MCF 10A (cell line): ENCODE measurements at regions of chr14 and their contacts with region 1.

Region 1: DNA sequence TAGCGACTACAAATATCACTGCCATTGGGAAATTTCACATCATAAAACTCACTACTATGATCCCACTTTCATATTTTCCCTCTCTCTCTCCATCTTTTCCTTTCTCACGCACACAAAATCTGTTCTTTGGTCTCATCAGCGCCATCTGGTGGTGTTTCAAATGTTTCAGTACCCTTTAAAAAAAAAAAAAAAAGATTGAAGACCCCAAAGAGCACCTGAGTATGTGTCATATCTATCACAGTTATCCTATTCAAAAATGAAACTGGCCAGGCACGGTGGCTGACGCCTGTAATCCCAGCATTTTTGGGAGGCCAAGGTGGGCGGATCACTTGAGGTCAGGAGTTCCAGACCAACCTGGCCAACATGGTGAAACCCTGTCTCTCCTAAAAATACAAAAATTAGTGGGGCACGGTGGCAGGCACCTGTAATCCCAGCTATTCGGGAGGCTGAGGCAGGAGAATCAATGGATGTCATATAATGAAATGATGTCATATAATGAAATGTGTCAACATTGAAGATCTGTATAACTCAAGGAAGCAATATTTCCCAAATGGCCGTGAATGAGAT is 72.4 kb downstream of the TTC9 start:
- DNase-seq: peak; percentile 72
- H3K4me3 Mint-ChIP-seq: no peak overlapping the region
- H3K27ac Mint-ChIP-seq: no peak overlapping the region
- H3K4me1 Mint-ChIP-seq: peaks cover 17% of the 10 kb centered on the region
- H3K27me3 Mint-ChIP-seq: no peaks in the 10 kb centered on the region
- CTCF ChIP-seq: peak; percentile 72

Region 2: DNA sequence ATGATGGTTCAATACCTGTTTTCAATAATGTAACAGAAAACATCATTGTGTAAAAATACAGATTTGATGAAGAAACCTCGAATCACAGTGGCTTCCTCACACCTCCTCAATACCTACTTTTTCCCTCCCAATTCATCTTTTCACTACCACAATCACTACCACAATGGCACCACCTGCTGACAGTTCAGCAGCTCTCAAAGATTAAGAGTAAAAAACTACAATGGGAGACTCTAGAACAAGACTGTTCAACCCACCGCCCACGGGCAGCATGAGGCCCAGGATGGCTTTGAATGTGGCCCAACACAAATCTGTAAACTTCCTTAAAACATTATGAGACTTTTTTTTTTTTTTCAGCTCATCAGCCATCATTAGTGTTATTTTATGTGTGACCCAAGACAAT is 128.9 kb before region 1 on chr14:
- CTCF ChIA-PET with region 1: no interaction called
- POLR2A ChIA-PET with region 1: no interaction called
- intact Hi-C with region 1: no loop called
- DNase-seq: no peak
- H3K4me3 Mint-ChIP-seq: no peak overlapping the region
- H3K27ac Mint-ChIP-seq: no peak overlapping the region
- H3K4me1 Mint-ChIP-seq: no peaks in the 10 kb centered on the region
- H3K27me3 Mint-ChIP-seq: no peaks in the 10 kb centered on the region
- CTCF ChIP-seq: no peak

Region 3: DNA sequence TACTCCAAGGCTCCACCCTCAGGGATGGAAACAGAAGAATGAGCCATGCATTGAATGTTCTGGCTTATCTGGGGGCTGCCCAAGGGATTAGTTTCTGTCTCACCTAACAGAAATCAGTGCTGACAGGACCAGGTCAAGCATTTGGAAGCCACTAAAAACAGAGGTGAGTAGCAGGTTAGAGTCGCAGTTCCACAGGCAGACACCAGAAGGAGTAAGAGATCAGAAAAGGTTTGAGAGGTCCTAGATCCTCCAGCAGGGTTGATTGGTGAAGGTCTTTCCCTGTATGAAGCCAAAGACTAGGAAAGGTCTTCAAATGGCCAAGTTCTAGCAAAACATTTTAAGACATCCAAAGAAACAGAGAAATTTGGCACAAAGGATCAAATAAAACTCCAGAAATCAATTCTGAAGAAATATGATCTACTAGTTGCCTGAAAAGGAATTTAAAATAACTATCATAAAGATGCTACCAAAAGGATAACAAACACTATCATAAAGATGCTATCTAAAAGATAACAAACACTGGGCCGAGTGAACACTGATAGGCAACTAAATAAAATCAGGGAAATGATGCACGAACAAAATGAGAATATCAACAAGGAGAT is 91.9 kb before region 1 on chr14:
- CTCF ChIA-PET with region 1: interaction called, 97 read pairs
- POLR2A ChIA-PET with region 1: interaction called, 4 read pairs
- intact Hi-C with region 1: loop called (anchors 1 kb)
- DNase-seq: peak; percentile 71
- H3K4me3 Mint-ChIP-seq: no peak overlapping the region
- H3K27ac Mint-ChIP-seq: no peak overlapping the region
- H3K4me1 Mint-ChIP-seq: no peaks in the 10 kb centered on the region
- H3K27me3 Mint-ChIP-seq: no peaks in the 10 kb centered on the region
- CTCF ChIP-seq: peak; percentile 76

Region 4: GRCh38 chr14:70640938-70641547 is 73.1 kb before region 1 on chr14:
- CTCF ChIA-PET with region 1: interaction called, 3 read pairs
- POLR2A ChIA-PET with region 1: no interaction called
- intact Hi-C with region 1: loop called (anchors 5 kb)
- DNase-seq: peak; percentile 40
- H3K4me3 Mint-ChIP-seq: peak overlapping the region; percentile 85
- H3K27ac Mint-ChIP-seq: no peak overlapping the region
- H3K4me1 Mint-ChIP-seq: no peaks in the 10 kb centered on the region
- H3K27me3 Mint-ChIP-seq: peaks cover 16% of the 10 kb centered on the region
- CTCF ChIP-seq: no peak

Region 5: GRCh38 chr14:70654632-70655031 is 59.5 kb before region 1 on chr14:
- CTCF ChIA-PET with region 1: no interaction called
- POLR2A ChIA-PET with region 1: no interaction called
- intact Hi-C with region 1: no loop called
- DNase-seq: no peak
- H3K4me3 Mint-ChIP-seq: no peak overlapping the region
- H3K27ac Mint-ChIP-seq: no peak overlapping the region
- H3K4me1 Mint-ChIP-seq: peaks cover 5% of the 10 kb centered on the region
- H3K27me3 Mint-ChIP-seq: no peaks in the 10 kb centered on the region
- CTCF ChIP-seq: no peak

Region 6: GRCh38 chr14:70972107-70972976 is 258.2 kb after region 1 on chr14:
- CTCF ChIA-PET with region 1: no interaction called
- POLR2A ChIA-PET with region 1: no interaction called
- intact Hi-C with region 1: loop called (anchors 5 kb)
- DNase-seq: peak; percentile 88
- H3K4me3 Mint-ChIP-seq: no peak overlapping the region
- H3K27ac Mint-ChIP-seq: peak overlapping the region; percentile 53
- H3K4me1 Mint-ChIP-seq: peaks cover 8% of the 10 kb centered on the region
- H3K27me3 Mint-ChIP-seq: no peaks in the 10 kb centered on the region
- CTCF ChIP-seq: peak; percentile 81